CD4-positive, alpha-beta T cell (primary cell): ENCODE measurements at regions of chr17 and their contacts with region 1.

Region 1: GRCh38 chr17:64420143-64420971 is 28.6 kb upstream of the MILR1 start:
- DNase-seq: peak in 7 of 14 experiments; percentile 15 to 85 (median 44)
- ATAC-seq: peak; percentile 81
- H3K4me3 ChIP-seq: no peak overlapping the region
- H3K4me3 Mint-ChIP-seq: no peak overlapping the region
- H3K27ac ChIP-seq: no peak overlapping the region
- H3K27ac Mint-ChIP-seq: no peak overlapping the region
- H3K4me1 ChIP-seq: peaks cover 5% of the 10 kb centered on the region
- H3K4me1 Mint-ChIP-seq: peaks cover 5% of the 10 kb centered on the region
- H3K27me3 ChIP-seq: no peaks in the 10 kb centered on the region
- H3K27me3 Mint-ChIP-seq: no peaks in the 10 kb centered on the region
- CTCF ChIP-seq: peak; percentile 89

Region 2: DNA sequence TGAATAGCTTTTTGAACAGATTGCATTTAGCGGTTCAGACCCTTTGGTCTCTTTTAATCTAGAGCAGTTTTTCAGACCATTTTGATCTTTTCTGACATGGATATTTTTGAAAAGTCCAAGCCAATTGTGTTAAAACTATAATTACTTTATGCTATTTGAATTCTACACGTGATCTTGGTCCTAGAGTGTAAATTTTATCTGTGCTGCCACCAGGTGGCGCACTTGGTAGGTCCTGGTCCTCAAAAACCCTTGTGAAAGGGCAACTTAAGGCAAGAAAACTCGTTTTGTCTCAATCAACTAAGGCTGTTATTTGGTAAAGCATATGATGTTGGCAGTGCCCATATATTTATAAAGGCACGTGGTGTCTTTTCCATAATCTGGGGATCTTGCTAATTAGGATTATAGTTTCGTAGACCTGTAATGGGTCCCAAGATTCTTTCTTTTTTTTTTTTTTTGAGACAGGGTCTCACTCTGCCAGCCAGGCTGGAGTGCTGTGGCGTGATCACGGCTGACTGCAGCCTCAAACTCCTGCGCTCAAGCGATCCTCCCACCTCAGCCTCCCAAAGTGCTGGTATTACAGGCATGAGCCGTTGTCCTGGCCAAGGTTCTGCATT is 113.4 kb before region 1 on chr17:
- CTCF ChIA-PET with region 1: interaction called, 8 read pairs
- POLR2A ChIA-PET with region 1: interaction called, 4 read pairs
- intact Hi-C with region 1: loop called (anchors 1 kb)
- DNase-seq: peak; percentile 53 to 87 (median 64)
- ATAC-seq: peak; percentile 71
- H3K4me3 ChIP-seq: no peak overlapping the region
- H3K4me3 Mint-ChIP-seq: no peak overlapping the region
- H3K27ac ChIP-seq: no peak overlapping the region
- H3K27ac Mint-ChIP-seq: no peak overlapping the region
- H3K4me1 ChIP-seq: no peaks in the 10 kb centered on the region
- H3K4me1 Mint-ChIP-seq: no peaks in the 10 kb centered on the region
- H3K27me3 ChIP-seq: no peaks in the 10 kb centered on the region
- H3K27me3 Mint-ChIP-seq: no peaks in the 10 kb centered on the region
- CTCF ChIP-seq: peak; percentile 87

Region 3: DNA sequence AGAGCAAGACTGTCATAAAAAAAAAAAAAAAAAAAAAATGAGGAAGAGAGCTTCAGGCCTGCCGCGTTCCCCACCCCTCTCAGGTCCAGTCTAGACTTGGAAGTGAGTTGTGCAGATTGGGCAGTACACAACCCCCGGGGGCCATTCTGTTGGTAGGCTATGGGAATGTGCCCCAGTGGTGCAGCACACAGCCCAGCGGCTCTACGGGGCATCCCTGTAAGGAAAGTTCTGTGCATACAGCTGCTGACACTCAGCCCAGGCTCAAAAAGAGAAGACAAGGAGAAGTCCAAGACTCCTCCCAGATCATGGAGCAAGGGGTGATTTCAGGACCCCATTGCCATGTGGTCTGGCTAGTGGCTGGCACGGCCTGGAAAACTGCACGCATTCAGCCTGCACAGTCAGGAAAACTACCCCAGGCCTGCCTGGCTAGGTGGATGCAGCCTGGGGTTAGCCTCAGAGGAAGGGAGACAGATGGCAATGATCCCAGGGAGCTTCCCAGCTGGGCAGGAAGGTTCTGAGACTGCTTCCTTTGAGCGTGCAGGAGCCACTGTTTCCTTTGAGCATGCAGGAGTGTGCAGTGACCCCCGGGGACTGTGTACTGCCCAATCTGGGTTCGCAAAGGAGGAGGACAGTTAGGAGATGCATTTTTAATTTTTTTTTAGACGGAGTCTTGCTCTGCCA is 74.5 kb before region 1 on chr17:
- CTCF ChIA-PET with region 1: interaction called, 7 read pairs
- POLR2A ChIA-PET with region 1: interaction called, 18 read pairs
- intact Hi-C with region 1: no loop called
- DNase-seq: no peak
- ATAC-seq: no peak
- H3K4me3 ChIP-seq: no peak overlapping the region
- H3K4me3 Mint-ChIP-seq: no peak overlapping the region
- H3K27ac ChIP-seq: no peak overlapping the region
- H3K27ac Mint-ChIP-seq: peak overlapping the region; percentile 49
- H3K4me1 ChIP-seq: peaks cover 63% of the 10 kb centered on the region
- H3K4me1 Mint-ChIP-seq: peaks cover 48% of the 10 kb centered on the region
- H3K27me3 ChIP-seq: no peaks in the 10 kb centered on the region
- H3K27me3 Mint-ChIP-seq: no peaks in the 10 kb centered on the region
- CTCF ChIP-seq: no peak

Region 4: DNA sequence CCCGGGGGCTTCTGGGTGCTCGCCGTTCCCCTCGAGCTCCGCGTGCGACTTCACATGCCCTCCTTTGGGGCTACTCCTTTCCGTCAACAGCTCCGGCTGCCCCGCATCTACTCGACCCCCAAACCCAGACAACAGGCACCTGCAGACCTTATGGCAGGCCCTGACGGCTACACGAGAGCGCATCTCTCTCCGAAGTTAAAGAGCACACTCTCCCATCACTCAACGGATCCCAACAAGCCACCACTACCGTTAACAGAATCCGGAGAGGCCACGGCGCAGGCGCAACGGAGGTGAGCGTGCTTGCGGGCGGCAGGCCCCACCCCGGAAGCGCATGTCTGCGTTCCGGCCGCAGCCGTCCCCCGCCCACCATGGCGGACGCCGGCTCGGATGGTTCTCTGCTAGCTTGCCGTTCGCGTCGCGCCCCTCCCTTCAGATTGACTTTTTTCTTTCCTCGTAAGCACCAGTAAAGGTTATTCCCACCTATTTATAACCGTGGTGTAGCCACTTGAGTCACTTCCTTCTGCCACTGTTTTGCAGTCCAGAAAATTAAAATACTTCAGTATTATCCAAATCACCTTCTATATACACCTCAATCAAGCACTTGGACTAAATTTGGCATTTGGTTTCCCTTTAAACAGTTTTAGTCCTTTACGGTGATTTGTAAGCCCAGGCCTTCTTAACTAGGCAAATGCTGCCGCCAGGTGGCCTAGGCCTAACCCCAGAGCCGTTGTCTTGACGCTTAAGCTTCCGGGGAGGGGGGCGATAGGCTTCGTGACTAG is 76.6 kb after region 1 on chr17 and contains the start of gene POLG2:
- CTCF ChIA-PET with region 1: interaction called, 61 read pairs
- POLR2A ChIA-PET with region 1: interaction called, 14 read pairs
- intact Hi-C with region 1: no loop called
- DNase-seq: peak; percentile 93 to 99 (median 95)
- ATAC-seq: peak; percentile 77
- H3K4me3 ChIP-seq: peak within 1 kb of the TSS; percentile 77
- H3K4me3 Mint-ChIP-seq: peak within 1 kb of the TSS; percentile 100
- H3K27ac ChIP-seq: peak within 1 kb of the TSS; percentile 85 to 91
- H3K27ac Mint-ChIP-seq: peak within 1 kb of the TSS; percentile 99
- H3K4me1 ChIP-seq: peaks cover 44% of the 10 kb centered on the region
- H3K4me1 Mint-ChIP-seq: peaks cover 83% of the 10 kb centered on the region
- H3K27me3 ChIP-seq: no peaks in the 10 kb centered on the region
- H3K27me3 Mint-ChIP-seq: no peaks in the 10 kb centered on the region
- CTCF ChIP-seq: peak; percentile 56
- total RNA-seq, gene POLG2: 32.8 to 34.1 TPM

Region 5: GRCh38 chr17:64653325-64653984 is 233.1 kb after region 1 on chr17:
- CTCF ChIA-PET with region 1: interaction called, 6 read pairs
- POLR2A ChIA-PET with region 1: no interaction called
- intact Hi-C with region 1: loop called (anchors 1 to 2 kb)
- DNase-seq: no peak
- ATAC-seq: no peak
- H3K4me3 ChIP-seq: no peak overlapping the region
- H3K4me3 Mint-ChIP-seq: no peak overlapping the region
- H3K27ac ChIP-seq: no peak overlapping the region
- H3K27ac Mint-ChIP-seq: no peak overlapping the region
- H3K4me1 ChIP-seq: peaks cover 16% of the 10 kb centered on the region
- H3K4me1 Mint-ChIP-seq: peaks cover 70% of the 10 kb centered on the region
- H3K27me3 ChIP-seq: no peaks in the 10 kb centered on the region
- H3K27me3 Mint-ChIP-seq: no peaks in the 10 kb centered on the region
- CTCF ChIP-seq: no peak